Activated CD4-positive, alpha-beta memory T cell treated with anti-CD3 and anti-CD28 coated beads, Interleukin-2, amount 10 ng/mL, durations not matched to agents 7 days and 5 days (primary cell): ENCODE measurements at regions of chr3 and their contacts with region 1.

Region 1: DNA sequence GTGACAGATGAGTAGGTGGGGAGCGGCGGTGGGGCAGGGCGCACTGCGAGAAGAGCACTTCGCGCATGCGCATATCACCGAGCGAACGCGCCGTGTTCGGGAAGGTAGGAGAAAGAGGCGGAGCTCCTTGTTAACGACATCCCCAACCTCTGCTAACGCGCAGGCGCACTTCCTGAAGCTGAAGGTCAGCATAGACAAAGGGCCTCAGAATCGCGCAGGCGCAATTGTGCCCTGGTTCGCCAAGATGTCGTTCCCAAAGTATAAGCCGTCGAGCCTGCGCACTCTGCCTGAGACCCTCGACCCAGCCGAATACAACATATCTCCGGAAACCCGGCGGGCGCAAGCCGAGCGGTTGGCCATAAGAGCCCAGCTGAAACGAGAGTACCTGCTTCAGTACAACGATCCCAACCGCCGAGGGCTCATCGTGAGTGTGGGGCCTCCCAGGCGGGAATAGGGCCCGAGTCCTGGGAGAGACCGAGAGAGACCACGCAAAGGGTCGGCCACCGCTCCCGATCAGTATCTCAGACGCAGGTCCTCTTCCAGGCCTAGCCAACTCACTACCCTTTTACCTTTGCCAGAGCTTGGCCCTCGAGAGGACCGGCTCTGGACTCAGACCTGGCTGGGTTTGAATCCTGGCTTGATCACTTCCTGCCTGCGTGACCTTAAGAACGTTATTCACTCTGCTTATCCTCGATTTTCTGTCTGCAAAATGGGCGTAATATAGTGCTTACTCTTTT is at the start of gene NDUFB4:
- DNase-seq: peak; percentile 95
- H3K4me3 Mint-ChIP-seq: peak within 1 kb of the TSS; percentile 88
- H3K27ac Mint-ChIP-seq: peak within 1 kb of the TSS; percentile 89
- H3K4me1 Mint-ChIP-seq: peaks cover 9% of the 10 kb centered on the region
- H3K27me3 Mint-ChIP-seq: peaks cover 6% of the 10 kb centered on the region
- total RNA-seq, gene NDUFB4: 135 to 142 TPM

Region 2: GRCh38 chr3:120095226-120095978 is 500.9 kb before region 1 on chr3:
- CTCF ChIA-PET with region 1: no interaction called
- POLR2A ChIA-PET with region 1: interaction called, 12 read pairs
- DNase-seq: peak; percentile 93
- H3K4me3 Mint-ChIP-seq: no peak overlapping the region
- H3K27ac Mint-ChIP-seq: no peak overlapping the region
- H3K4me1 Mint-ChIP-seq: peaks cover 24% of the 10 kb centered on the region
- H3K27me3 Mint-ChIP-seq: no peaks in the 10 kb centered on the region

Region 3: GRCh38 chr3:120348981-120349818 is 247.1 kb before region 1 on chr3 and contains the start of gene LRRC58:
- CTCF ChIA-PET with region 1: interaction called, 3 read pairs
- POLR2A ChIA-PET with region 1: interaction called, 13 read pairs
- DNase-seq: peak; percentile 89
- H3K4me3 Mint-ChIP-seq: peak within 1 kb of the TSS; percentile 89
- H3K27ac Mint-ChIP-seq: peak within 1 kb of the TSS; percentile 85
- H3K4me1 Mint-ChIP-seq: peaks cover 47% of the 10 kb centered on the region
- H3K27me3 Mint-ChIP-seq: peaks cover 20% of the 10 kb centered on the region
- total RNA-seq, gene LRRC58: 23.2 to 24.8 TPM

Region 4: GRCh38 chr3:120558771-120559241 is 37.5 kb before region 1 on chr3:
- CTCF ChIA-PET with region 1: interaction called, 27 read pairs
- POLR2A ChIA-PET with region 1: interaction called, 4 read pairs
- DNase-seq: peak; percentile 88
- H3K4me3 Mint-ChIP-seq: peak overlapping the region; percentile 74
- H3K27ac Mint-ChIP-seq: no peak overlapping the region
- H3K4me1 Mint-ChIP-seq: peaks cover 13% of the 10 kb centered on the region
- H3K27me3 Mint-ChIP-seq: peaks cover 2% of the 10 kb centered on the region

Region 5: DNA sequence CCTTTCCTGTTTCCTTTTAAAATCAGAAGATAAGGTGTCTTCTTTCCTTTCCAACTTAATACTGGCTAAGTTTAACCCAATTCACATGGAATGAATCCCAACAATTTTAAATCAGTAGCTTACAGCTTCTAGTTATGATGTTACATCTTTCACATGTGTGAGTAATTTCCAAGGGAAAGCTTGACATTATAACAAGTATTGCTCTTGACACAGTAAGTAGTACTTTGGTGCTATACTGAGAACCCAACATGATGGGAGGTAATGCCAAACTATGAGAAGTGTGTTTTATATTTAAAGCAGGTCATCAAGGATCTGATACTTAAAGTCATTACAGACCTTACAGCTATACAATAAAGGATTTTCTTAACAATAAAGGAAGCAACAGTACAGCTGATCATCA is 117.0 kb after region 1 on chr3:
- CTCF ChIA-PET with region 1: no interaction called
- POLR2A ChIA-PET with region 1: interaction called, 14 read pairs
- DNase-seq: no peak
- H3K4me3 Mint-ChIP-seq: no peak overlapping the region
- H3K27ac Mint-ChIP-seq: no peak overlapping the region
- H3K4me1 Mint-ChIP-seq: peaks cover 7% of the 10 kb centered on the region
- H3K27me3 Mint-ChIP-seq: no peaks in the 10 kb centered on the region

Region 6: GRCh38 chr3:120742198-120742849 is 146.0 kb after region 1 on chr3 and contains the starts of genes GTF2E1 and RABL3:
- CTCF ChIA-PET with region 1: interaction called, 5 read pairs
- POLR2A ChIA-PET with region 1: interaction called, 69 read pairs
- DNase-seq: peak; percentile 98
- H3K4me3 Mint-ChIP-seq: peak within 1 kb of the TSS; percentile 80
- H3K27ac Mint-ChIP-seq: peak within 1 kb of the TSS; percentile 95
- H3K4me1 Mint-ChIP-seq: peaks cover 45% of the 10 kb centered on the region
- H3K27me3 Mint-ChIP-seq: no peaks in the 10 kb centered on the region
- total RNA-seq, gene GTF2E1: 28.7 to 34.5 TPM
- total RNA-seq, gene RABL3: 22.3 to 24.7 TPM

Region 7: GRCh38 chr3:120795017-120795648 is 198.8 kb after region 1 on chr3:
- CTCF ChIA-PET with region 1: interaction called, 32 read pairs
- POLR2A ChIA-PET with region 1: interaction called, 6 read pairs
- DNase-seq: peak; percentile 85
- H3K4me3 Mint-ChIP-seq: no peak overlapping the region
- H3K27ac Mint-ChIP-seq: no peak overlapping the region
- H3K4me1 Mint-ChIP-seq: no peaks in the 10 kb centered on the region
- H3K27me3 Mint-ChIP-seq: no peaks in the 10 kb centered on the region